ENCODE measurements at regions of chr7 and their contacts with region 1.

Region 1: DNA sequence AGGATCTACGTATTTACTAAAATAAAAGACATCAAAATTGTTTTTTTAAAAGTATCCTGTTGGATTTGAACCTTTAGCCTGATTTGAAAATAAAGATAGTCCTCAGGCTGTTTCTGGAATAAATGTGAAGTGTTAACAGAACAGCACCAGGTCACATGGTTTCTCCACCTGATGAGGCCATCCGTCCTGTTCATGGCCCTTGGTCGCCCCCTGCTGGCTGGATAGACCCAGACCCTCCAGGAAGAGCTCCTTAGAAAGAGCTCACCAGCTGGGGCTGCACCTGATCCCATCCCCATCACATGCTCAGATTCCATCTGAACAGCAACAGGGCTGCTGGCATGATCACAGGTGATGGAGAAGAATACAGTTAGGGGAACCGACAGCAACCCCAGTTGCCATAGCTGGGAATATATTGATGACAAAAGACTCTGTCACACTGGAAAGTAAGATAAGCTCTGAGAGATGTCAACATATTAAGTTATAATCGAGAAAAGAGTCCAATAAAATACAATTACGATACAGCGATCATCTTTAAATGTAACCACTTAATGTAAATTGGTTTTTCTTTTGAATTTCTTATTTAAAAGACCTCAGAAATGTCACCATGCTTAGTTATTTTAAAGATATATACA is 4.8 kb downstream of the OR2A14 start:
- DNase-seq: peak; percentile 83
- H3K4me3 ChIP-seq: peak overlapping the region in 1 of 2 experiments; percentile 29; a peak in 1 of 4 replicates
- H3K27ac ChIP-seq: no peak overlapping the region
- H3K4me1 ChIP-seq: no peaks in the 10 kb centered on the region; a peak in 1 of 4 replicates
- H3K27me3 ChIP-seq: peaks cover 11% of the 10 kb centered on the region; the same call in 1 of the 2 replicates
- CTCF ChIP-seq: peak; percentile 99
- EP300 ChIP-seq: no peak
- RAD21 ChIP-seq: peak; percentile 94

Region 2: DNA sequence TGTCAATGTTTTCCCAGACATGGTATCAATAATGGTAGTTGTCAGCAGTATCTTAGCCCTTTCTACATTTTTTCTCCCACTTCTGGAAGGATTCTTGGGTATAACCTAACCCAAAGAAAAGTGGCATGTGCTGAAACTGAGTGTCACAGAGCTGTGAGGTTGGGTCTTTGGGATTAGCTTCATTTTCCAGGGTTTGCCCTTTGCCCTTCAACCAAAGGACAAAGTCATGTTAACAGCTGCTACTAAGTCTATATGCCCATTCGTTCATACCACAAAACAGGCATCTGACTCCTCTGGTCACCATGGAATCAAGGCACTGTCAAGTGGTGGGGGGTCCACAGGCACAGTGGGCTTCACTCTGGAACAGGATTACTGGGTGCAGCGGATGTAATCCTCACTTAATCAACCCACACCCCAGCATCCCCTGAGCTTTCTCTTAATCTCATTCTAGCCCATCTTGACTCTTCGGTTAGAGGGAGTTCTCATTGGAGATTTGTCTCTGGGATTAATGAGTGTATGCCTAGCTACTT is 399.4 kb before region 1 on chr7:
- CTCF ChIA-PET with region 1: interaction called, 10 read pairs
- POLR2A ChIA-PET with region 1: no interaction called
- DNase-seq: no peak
- H3K4me3 ChIP-seq: no peak overlapping the region
- H3K27ac ChIP-seq: no peak overlapping the region
- H3K4me1 ChIP-seq: no peaks in the 10 kb centered on the region
- H3K27me3 ChIP-seq: no peaks in the 10 kb centered on the region
- CTCF ChIP-seq: no peak
- EP300 ChIP-seq: no peak
- RAD21 ChIP-seq: no peak

Region 3: GRCh38 chr7:144011458-144012230 is 116.2 kb before region 1 on chr7:
- CTCF ChIA-PET with region 1: no interaction called
- POLR2A ChIA-PET with region 1: no interaction called
- DNase-seq: peak; percentile 30
- H3K4me3 ChIP-seq: no peak overlapping the region
- H3K27ac ChIP-seq: no peak overlapping the region
- H3K4me1 ChIP-seq: no peaks in the 10 kb centered on the region
- H3K27me3 ChIP-seq: no peaks in the 10 kb centered on the region; the same call in 1 of the 2 replicates
- CTCF ChIP-seq: peak; percentile 69
- EP300 ChIP-seq: no peak
- RAD21 ChIP-seq: peak; percentile 83

Region 4: DNA sequence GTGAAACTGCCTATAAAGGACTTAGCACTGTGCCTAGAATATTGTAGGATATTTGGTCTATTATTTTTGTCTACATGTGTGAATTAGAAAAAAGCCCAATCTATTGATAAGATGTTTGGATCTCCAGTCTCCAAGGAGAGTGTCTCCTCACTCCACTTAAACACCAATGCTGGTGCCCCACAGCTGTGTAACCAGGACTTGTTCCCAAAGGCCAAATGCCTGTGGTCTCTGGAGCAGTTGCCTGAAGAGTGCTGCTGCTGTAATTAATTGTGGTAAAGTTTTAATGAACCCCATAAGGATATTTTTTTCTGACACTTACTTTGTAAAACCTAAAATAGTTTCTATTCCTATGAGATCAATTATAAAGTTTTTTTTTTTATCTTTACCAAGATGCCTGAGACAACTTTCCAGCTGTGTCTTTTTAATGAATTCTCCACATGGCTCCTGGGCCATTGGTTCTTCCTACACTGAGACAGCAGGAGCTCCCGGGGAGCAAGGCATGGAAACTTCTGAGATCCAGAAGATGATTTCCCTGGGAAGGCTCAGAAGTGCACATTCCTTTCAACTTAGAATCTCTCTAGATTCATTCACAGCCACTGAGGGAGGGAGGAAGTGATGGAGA is 90.3 kb before region 1 on chr7:
- CTCF ChIA-PET with region 1: no interaction called
- POLR2A ChIA-PET with region 1: no interaction called
- DNase-seq: no peak
- H3K4me3 ChIP-seq: no peak overlapping the region
- H3K27ac ChIP-seq: no peak overlapping the region
- H3K4me1 ChIP-seq: no peaks in the 10 kb centered on the region
- H3K27me3 ChIP-seq: peaks cover 5% of the 10 kb centered on the region; the same call in 1 of the 2 replicates
- CTCF ChIP-seq: no peak
- EP300 ChIP-seq: no peak
- RAD21 ChIP-seq: no peak

Measured in SK-N-SH (cell line).